ENCODE measurements at regions of chr6 and their contacts with region 1.

Region 1: GRCh38 chr6:1596088-1596852 is 13.4 kb upstream of the FOXC1 start:
- DNase-seq: peak; percentile 73
- H3K4me3 Mint-ChIP-seq: no peak overlapping the region
- H3K27ac Mint-ChIP-seq: no peak overlapping the region
- H3K4me1 Mint-ChIP-seq: peaks cover 4% of the 10 kb centered on the region
- H3K27me3 Mint-ChIP-seq: peaks cover 59% of the 10 kb centered on the region

Region 2: GRCh38 chr6:1524040-1524480 is 72.2 kb before region 1 on chr6:
- CTCF ChIA-PET with region 1: interaction called, 16 read pairs
- POLR2A ChIA-PET with region 1: no interaction called
- intact Hi-C with region 1: loop called (anchors 10 kb)
- DNase-seq: peak; percentile 87
- H3K4me3 Mint-ChIP-seq: peak overlapping the region; percentile 42
- H3K27ac Mint-ChIP-seq: peak overlapping the region; percentile 40
- H3K4me1 Mint-ChIP-seq: peaks cover 36% of the 10 kb centered on the region
- H3K27me3 Mint-ChIP-seq: peaks cover 10% of the 10 kb centered on the region

Region 3: GRCh38 chr6:2103644-2104523 is 507.6 kb after region 1 on chr6:
- CTCF ChIA-PET with region 1: interaction called, 14 read pairs
- POLR2A ChIA-PET with region 1: no interaction called
- intact Hi-C with region 1: no loop called
- DNase-seq: no peak
- H3K4me3 Mint-ChIP-seq: no peak overlapping the region
- H3K27ac Mint-ChIP-seq: no peak overlapping the region
- H3K4me1 Mint-ChIP-seq: no peaks in the 10 kb centered on the region
- H3K27me3 Mint-ChIP-seq: peaks cover 2% of the 10 kb centered on the region

Region 4: GRCh38 chr6:2196079-2196679 is 599.9 kb after region 1 on chr6:
- CTCF ChIA-PET with region 1: interaction called, 9 read pairs
- POLR2A ChIA-PET with region 1: no interaction called
- intact Hi-C with region 1: loop called (anchors 2 kb)
- DNase-seq: no peak
- H3K4me3 Mint-ChIP-seq: no peak overlapping the region
- H3K27ac Mint-ChIP-seq: no peak overlapping the region
- H3K4me1 Mint-ChIP-seq: no peaks in the 10 kb centered on the region
- H3K27me3 Mint-ChIP-seq: no peaks in the 10 kb centered on the region

Region 5: GRCh38 chr6:2353412-2354137 is 757.3 kb after region 1 on chr6:
- CTCF ChIA-PET with region 1: interaction called, 39 read pairs
- POLR2A ChIA-PET with region 1: no interaction called
- intact Hi-C with region 1: no loop called
- DNase-seq: peak; percentile 70
- H3K4me3 Mint-ChIP-seq: no peak overlapping the region
- H3K27ac Mint-ChIP-seq: no peak overlapping the region
- H3K4me1 Mint-ChIP-seq: no peaks in the 10 kb centered on the region
- H3K27me3 Mint-ChIP-seq: no peaks in the 10 kb centered on the region

Region 6: DNA sequence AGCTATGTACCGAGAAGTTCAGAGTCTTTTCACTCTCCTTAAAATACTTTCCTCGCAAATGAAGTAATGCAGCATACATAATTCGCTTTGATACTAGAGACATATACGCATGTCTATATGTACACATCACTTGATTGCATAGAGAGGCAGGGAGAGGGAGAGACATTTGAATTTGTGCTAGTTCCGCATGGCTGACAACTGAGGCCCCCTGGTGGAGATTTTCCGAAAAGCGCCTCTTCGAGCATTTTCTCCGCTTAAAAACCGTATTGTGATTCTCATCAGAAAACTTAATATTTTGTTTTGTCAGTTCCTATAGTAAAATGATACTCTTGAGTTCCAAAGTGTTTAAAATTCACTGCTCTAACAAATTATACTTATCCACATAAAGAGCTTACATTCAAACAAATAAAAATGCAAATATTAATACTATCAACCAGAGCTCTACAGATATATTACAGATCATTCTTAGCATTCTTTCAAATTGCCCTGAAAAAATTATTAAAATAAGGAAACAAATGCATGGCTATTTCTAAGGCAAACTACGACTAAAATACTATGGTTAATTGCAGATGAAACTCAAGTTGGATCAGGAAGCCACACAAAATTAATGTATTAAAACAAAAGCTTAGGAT is 1153.8 kb after region 1 on chr6:
- CTCF ChIA-PET with region 1: interaction called, 38 read pairs
- POLR2A ChIA-PET with region 1: no interaction called
- intact Hi-C with region 1: loop called (anchors 5 kb)
- DNase-seq: peak; percentile 80
- H3K4me3 Mint-ChIP-seq: no peak overlapping the region
- H3K27ac Mint-ChIP-seq: no peak overlapping the region
- H3K4me1 Mint-ChIP-seq: peaks cover 2% of the 10 kb centered on the region
- H3K27me3 Mint-ChIP-seq: peaks cover 12% of the 10 kb centered on the region